ENCODE measurements at regions of chr12 and their contacts with region 1.

Region 1: GRCh38 chr12:58540480-58541299 is 379.6 kb downstream of the LRIG3 start:
- DNase-seq: peak; percentile 24 to 87
- ATAC-seq: peak; percentile 97 to 100
- H3K4me3 ChIP-seq: no peak overlapping the region
- H3K27ac ChIP-seq: peak overlapping the region; percentile 9 to 11; a peak in 3 of 6 replicates
- H3K4me1 ChIP-seq: peaks cover 25% of the 10 kb centered on the region
- CTCF ChIP-seq: peak; percentile 90
- EP300 ChIP-seq: no peak
- POLR2A ChIP-seq: no peak
- RAD21 ChIP-seq: peak; percentile 96

Region 2: GRCh38 chr12:58529897-58530741 is 10.6 kb before region 1 on chr12:
- CTCF ChIA-PET with region 1: interaction called, 12 read pairs
- POLR2A ChIA-PET with region 1: no interaction called
- DNase-seq: no peak
- ATAC-seq: no peak
- H3K4me3 ChIP-seq: no peak overlapping the region
- H3K27ac ChIP-seq: peak overlapping the region; percentile 35 to 49; a peak in 5 of 6 replicates
- H3K4me1 ChIP-seq: peaks cover 45% of the 10 kb centered on the region
- CTCF ChIP-seq: no peak
- EP300 ChIP-seq: no peak
- POLR2A ChIP-seq: no peak
- RAD21 ChIP-seq: no peak

Region 3: DNA sequence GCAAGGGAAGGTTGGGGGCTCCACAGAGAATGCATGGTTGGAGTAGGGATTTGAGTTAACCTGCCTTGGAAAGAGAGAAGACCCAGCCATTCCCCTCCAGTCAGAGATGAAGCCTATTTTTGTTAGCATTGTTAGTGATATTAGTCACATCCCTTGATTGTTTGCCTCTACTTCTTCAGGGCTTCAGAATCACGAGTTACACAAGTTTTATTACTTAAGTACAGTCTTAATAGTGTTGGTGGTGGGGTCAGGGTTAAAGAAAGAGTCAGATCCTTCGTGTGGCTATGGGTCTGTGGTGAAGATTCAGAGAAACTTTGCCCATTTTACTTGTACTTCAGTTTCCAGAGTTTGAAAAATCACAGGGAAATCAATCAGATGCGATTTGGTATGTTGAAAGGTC is 16.5 kb after region 1 on chr12:
- CTCF ChIA-PET with region 1: interaction called, 19 read pairs
- POLR2A ChIA-PET with region 1: no interaction called
- DNase-seq: no peak
- ATAC-seq: no peak; a peak in 1 of 6 replicates
- H3K4me3 ChIP-seq: no peak overlapping the region
- H3K27ac ChIP-seq: no peak overlapping the region
- H3K4me1 ChIP-seq: peaks cover 11% of the 10 kb centered on the region; the same call in 2 of the 3 replicates
- CTCF ChIP-seq: no peak
- EP300 ChIP-seq: no peak
- POLR2A ChIP-seq: no peak
- RAD21 ChIP-seq: no peak

Region 4: DNA sequence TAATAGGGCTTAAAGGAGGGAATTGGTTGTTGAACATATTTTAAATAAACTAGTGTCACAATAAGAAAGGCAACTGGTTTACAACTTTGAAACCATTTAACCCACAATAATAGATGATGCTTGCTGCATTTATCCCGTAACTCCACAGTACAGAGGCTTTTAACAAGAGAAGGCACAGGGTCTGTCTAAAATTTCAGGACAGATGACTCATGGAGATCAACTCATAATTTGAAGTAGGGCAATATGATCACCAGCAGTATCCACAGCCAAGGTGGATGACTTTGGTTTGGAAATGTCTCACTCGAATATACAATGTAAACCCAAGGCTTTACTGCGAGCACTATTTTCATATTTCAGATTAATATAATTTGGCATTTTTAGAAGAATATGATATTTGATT is 39.4 kb after region 1 on chr12:
- CTCF ChIA-PET with region 1: no interaction called
- POLR2A ChIA-PET with region 1: no interaction called
- DNase-seq: no peak
- ATAC-seq: no peak
- H3K4me3 ChIP-seq: no peak overlapping the region
- H3K27ac ChIP-seq: no peak overlapping the region
- H3K4me1 ChIP-seq: peaks cover 11% of the 10 kb centered on the region
- CTCF ChIP-seq: no peak
- EP300 ChIP-seq: no peak
- POLR2A ChIP-seq: no peak
- RAD21 ChIP-seq: no peak

Region 5: GRCh38 chr12:58728397-58728796 is 187.7 kb after region 1 on chr12:
- CTCF ChIA-PET with region 1: no interaction called
- POLR2A ChIA-PET with region 1: no interaction called
- DNase-seq: peak in 1 of 2 experiments; percentile 37
- ATAC-seq: peak in 1 of 2 experiments; percentile 79; a peak in 3 of 6 replicates
- H3K4me3 ChIP-seq: no peak overlapping the region
- H3K27ac ChIP-seq: no peak overlapping the region
- H3K4me1 ChIP-seq: peaks cover 29% of the 10 kb centered on the region
- CTCF ChIP-seq: no peak
- EP300 ChIP-seq: no peak
- POLR2A ChIP-seq: no peak
- RAD21 ChIP-seq: no peak

Region 6: GRCh38 chr12:59087077-59087673 is 546.5 kb after region 1 on chr12:
- CTCF ChIA-PET with region 1: interaction called, 29 read pairs
- POLR2A ChIA-PET with region 1: no interaction called
- DNase-seq: no peak
- ATAC-seq: no peak
- H3K4me3 ChIP-seq: no peak overlapping the region
- H3K27ac ChIP-seq: no peak overlapping the region
- H3K4me1 ChIP-seq: no peaks in the 10 kb centered on the region
- CTCF ChIP-seq: peak; percentile 54
- EP300 ChIP-seq: no peak
- POLR2A ChIP-seq: no peak
- RAD21 ChIP-seq: peak; percentile 69 to 76

Region 7: GRCh38 chr12:59113831-59114615 is 573.3 kb after region 1 on chr12:
- CTCF ChIA-PET with region 1: interaction called, 12 read pairs
- POLR2A ChIA-PET with region 1: no interaction called
- DNase-seq: peak; percentile 43 to 84
- ATAC-seq: peak; percentile 91 to 96
- H3K4me3 ChIP-seq: no peak overlapping the region
- H3K27ac ChIP-seq: peak overlapping the region in 1 of 2 experiments; percentile 67; a peak in 2 of 6 replicates
- H3K4me1 ChIP-seq: no peaks in the 10 kb centered on the region
- CTCF ChIP-seq: peak; percentile 76
- EP300 ChIP-seq: no peak
- POLR2A ChIP-seq: no peak
- RAD21 ChIP-seq: peak; percentile 84 to 89

Region 8: DNA sequence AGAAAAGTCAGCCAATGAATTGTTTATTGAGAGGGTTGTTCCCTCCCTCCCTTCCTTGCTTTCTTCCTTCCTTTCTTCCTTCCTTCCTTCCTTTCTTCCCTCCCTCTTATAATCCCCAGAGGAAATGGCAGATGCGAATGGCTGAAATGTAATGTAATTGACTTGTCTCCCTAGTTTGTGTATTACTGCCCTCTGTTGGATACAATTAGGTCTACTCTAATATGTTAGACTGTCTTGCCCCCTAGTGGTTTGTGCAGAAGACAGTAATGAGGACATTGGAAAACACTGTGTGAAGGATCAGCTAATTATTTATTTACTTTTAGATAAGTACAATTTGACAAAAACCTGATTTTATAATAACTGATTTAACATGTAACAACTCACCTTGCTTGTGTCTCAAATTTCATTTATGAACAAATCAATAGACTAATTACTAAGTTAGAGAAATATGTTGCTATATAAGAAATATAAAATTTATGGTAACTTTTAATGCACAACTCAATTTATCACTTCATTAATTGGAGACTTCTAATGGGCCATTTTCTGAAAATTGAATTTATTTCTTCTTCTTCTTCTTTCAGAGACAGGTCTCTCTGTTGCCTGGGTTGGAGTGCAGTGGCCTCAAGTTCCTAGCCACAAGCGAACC is 609.4 kb after region 1 on chr12:
- CTCF ChIA-PET with region 1: interaction called, 30 read pairs
- POLR2A ChIA-PET with region 1: no interaction called
- DNase-seq: peak; percentile 28 to 86
- ATAC-seq: peak; percentile 76 to 99
- H3K4me3 ChIP-seq: no peak overlapping the region
- H3K27ac ChIP-seq: no peak overlapping the region
- H3K4me1 ChIP-seq: no peaks in the 10 kb centered on the region
- CTCF ChIP-seq: peak; percentile 99
- EP300 ChIP-seq: no peak
- POLR2A ChIP-seq: no peak
- RAD21 ChIP-seq: peak; percentile 93 to 99

Region 9: GRCh38 chr12:59164991-59165718 is 624.5 kb after region 1 on chr12:
- CTCF ChIA-PET with region 1: interaction called, 11 read pairs
- POLR2A ChIA-PET with region 1: no interaction called
- DNase-seq: peak; percentile 5 to 42
- ATAC-seq: peak; percentile 62 to 68; a peak in 2 of 6 replicates
- H3K4me3 ChIP-seq: no peak overlapping the region
- H3K27ac ChIP-seq: no peak overlapping the region
- H3K4me1 ChIP-seq: no peaks in the 10 kb centered on the region
- CTCF ChIP-seq: peak; percentile 57
- EP300 ChIP-seq: no peak
- POLR2A ChIP-seq: no peak
- RAD21 ChIP-seq: peak; percentile 64 to 67

Measured in A549 (cell line).